B cell (primary cell): ENCODE measurements at regions of chr2 and their contacts with region 1.

Region 1: GRCh38 chr2:191574232-191574631 is 103.7 kb upstream of the NABP1 start:
- DNase-seq: no peak
- ATAC-seq: no peak
- H3K4me3 ChIP-seq: no peak overlapping the region
- H3K4me3 Mint-ChIP-seq: no peak overlapping the region
- H3K27ac ChIP-seq: no peak overlapping the region
- H3K27ac Mint-ChIP-seq: no peak overlapping the region
- H3K4me1 ChIP-seq: peaks cover 8 to 13% of the 10 kb centered on the region in 2 donors
- H3K4me1 Mint-ChIP-seq: peaks cover 14% of the 10 kb centered on the region
- H3K27me3 ChIP-seq: peaks cover 0 to 3% (median 0%) of the 10 kb centered on the region in 4 experiments
- H3K27me3 Mint-ChIP-seq: peaks cover 5% of the 10 kb centered on the region
- CTCF ChIP-seq: no peak

Region 2: GRCh38 chr2:191189112-191189635 is 385.1 kb before region 1 on chr2:
- CTCF ChIA-PET with region 1: no interaction called
- POLR2A ChIA-PET with region 1: no interaction called
- intact Hi-C with region 1: no loop called
- DNase-seq: no peak
- ATAC-seq: no peak
- H3K4me3 ChIP-seq: no peak overlapping the region
- H3K4me3 Mint-ChIP-seq: no peak overlapping the region
- H3K27ac ChIP-seq: no peak overlapping the region
- H3K27ac Mint-ChIP-seq: no peak overlapping the region
- H3K4me1 ChIP-seq: peaks cover 9% of the 10 kb centered on the region in 2 donors
- H3K4me1 Mint-ChIP-seq: peaks cover 8% of the 10 kb centered on the region
- H3K27me3 ChIP-seq: no peaks in the 10 kb centered on the region
- H3K27me3 Mint-ChIP-seq: no peaks in the 10 kb centered on the region
- CTCF ChIP-seq: no peak

Region 3: GRCh38 chr2:191601060-191601459 is 26.8 kb after region 1 on chr2:
- CTCF ChIA-PET with region 1: no interaction called
- POLR2A ChIA-PET with region 1: interaction called, 11 read pairs
- intact Hi-C with region 1: loop called (anchors 5 kb)
- DNase-seq: no peak
- ATAC-seq: no peak
- H3K4me3 ChIP-seq: no peak overlapping the region
- H3K4me3 Mint-ChIP-seq: no peak overlapping the region
- H3K27ac ChIP-seq: no peak overlapping the region
- H3K27ac Mint-ChIP-seq: no peak overlapping the region
- H3K4me1 ChIP-seq: no peaks in the 10 kb centered on the region
- H3K4me1 Mint-ChIP-seq: no peaks in the 10 kb centered on the region
- H3K27me3 ChIP-seq: no peaks in the 10 kb centered on the region
- H3K27me3 Mint-ChIP-seq: peaks cover 13% of the 10 kb centered on the region
- CTCF ChIP-seq: no peak

Region 4: GRCh38 chr2:192029089-192029488 is 454.9 kb after region 1 on chr2:
- CTCF ChIA-PET with region 1: no interaction called
- POLR2A ChIA-PET with region 1: no interaction called
- intact Hi-C with region 1: no loop called
- DNase-seq: no peak
- ATAC-seq: no peak
- H3K4me3 ChIP-seq: no peak overlapping the region
- H3K4me3 Mint-ChIP-seq: no peak overlapping the region
- H3K27ac ChIP-seq: no peak overlapping the region
- H3K27ac Mint-ChIP-seq: no peak overlapping the region
- H3K4me1 ChIP-seq: no peaks in the 10 kb centered on the region
- H3K4me1 Mint-ChIP-seq: no peaks in the 10 kb centered on the region
- H3K27me3 ChIP-seq: no peaks in the 10 kb centered on the region
- H3K27me3 Mint-ChIP-seq: no peaks in the 10 kb centered on the region
- CTCF ChIP-seq: no peak